PC-9 (cell line): ENCODE measurements at regions of chr15 and their contacts with region 1.

Region 1: GRCh38 chr15:61090386-61091288 is 138.5 kb downstream of the RORA start:
- DNase-seq: no peak
- H3K4me3 ChIP-seq: no peak overlapping the region
- H3K27ac ChIP-seq: no peak overlapping the region
- H3K4me1 ChIP-seq: no peaks in the 10 kb centered on the region
- H3K27me3 ChIP-seq: no peaks in the 10 kb centered on the region
- CTCF ChIP-seq: no peak

Region 2: GRCh38 chr15:60737217-60737616 is 353.4 kb before region 1 on chr15:
- CTCF ChIA-PET with region 1: no interaction called
- POLR2A ChIA-PET with region 1: interaction called, 18 read pairs
- intact Hi-C with region 1: no loop called
- DNase-seq: no peak
- H3K4me3 ChIP-seq: no peak overlapping the region
- H3K27ac ChIP-seq: no peak overlapping the region
- H3K4me1 ChIP-seq: no peaks in the 10 kb centered on the region
- H3K27me3 ChIP-seq: no peaks in the 10 kb centered on the region
- CTCF ChIP-seq: no peak